ENCODE measurements at regions of chr19 and their contacts with region 1.

Region 1: GRCh38 chr19:1189419-1189818 is 15.4 kb upstream of the SBNO2 start:
- DNase-seq: peak; percentile 56
- H3K4me3 Mint-ChIP-seq: peak overlapping the region; percentile 46
- H3K27ac Mint-ChIP-seq: peak overlapping the region; percentile 83
- H3K4me1 Mint-ChIP-seq: peaks cover 34% of the 10 kb centered on the region
- H3K27me3 Mint-ChIP-seq: no peaks in the 10 kb centered on the region

Region 2: DNA sequence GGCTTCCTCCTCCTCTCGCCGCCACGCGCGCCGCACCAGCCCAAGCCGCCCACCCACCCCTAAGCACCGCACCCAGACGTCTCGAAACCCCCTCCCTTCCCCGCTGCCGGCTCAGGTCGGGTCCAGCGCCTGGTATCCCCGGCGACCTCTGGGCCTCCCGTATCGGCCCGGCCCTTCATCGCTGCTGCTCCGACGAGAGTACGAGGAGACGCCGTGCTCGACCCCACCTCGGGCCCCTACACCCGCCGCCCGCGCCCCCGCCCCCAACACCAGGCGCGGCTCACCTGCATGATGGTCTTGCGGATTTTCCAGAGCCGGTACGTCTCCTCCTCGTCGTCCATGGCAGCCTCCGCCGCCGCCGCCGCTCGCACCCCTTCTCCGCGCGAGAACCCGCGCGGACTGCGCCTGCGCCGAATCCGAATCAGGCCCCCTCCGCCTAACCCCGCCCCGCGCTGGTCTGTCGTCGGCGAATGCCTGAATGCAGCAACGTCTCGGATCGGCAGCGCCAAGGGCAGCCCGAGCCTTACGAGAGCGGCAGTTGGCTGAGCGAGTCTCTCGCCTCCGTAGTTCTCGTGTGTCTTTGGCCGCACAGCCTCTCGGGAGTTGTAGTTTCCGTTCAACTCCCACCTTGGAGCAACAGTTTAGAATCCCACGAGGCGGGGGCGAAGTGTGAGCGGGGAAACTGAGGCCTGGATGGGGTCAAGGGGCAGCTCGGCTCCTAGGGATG is 94.3 kb before region 1 on chr19 and contains the start of gene POLR2E:
- intact Hi-C with region 1: loop called (anchors 1 kb)
- DNase-seq: peak; percentile 98
- H3K4me3 Mint-ChIP-seq: peak within 1 kb of the TSS; percentile 94
- H3K27ac Mint-ChIP-seq: peak within 1 kb of the TSS; percentile 97
- H3K4me1 Mint-ChIP-seq: peaks cover 41% of the 10 kb centered on the region
- H3K27me3 Mint-ChIP-seq: peaks cover 2% of the 10 kb centered on the region
- total RNA-seq, gene POLR2E: 265 and 282 TPM in 2 replicates

Region 3: DNA sequence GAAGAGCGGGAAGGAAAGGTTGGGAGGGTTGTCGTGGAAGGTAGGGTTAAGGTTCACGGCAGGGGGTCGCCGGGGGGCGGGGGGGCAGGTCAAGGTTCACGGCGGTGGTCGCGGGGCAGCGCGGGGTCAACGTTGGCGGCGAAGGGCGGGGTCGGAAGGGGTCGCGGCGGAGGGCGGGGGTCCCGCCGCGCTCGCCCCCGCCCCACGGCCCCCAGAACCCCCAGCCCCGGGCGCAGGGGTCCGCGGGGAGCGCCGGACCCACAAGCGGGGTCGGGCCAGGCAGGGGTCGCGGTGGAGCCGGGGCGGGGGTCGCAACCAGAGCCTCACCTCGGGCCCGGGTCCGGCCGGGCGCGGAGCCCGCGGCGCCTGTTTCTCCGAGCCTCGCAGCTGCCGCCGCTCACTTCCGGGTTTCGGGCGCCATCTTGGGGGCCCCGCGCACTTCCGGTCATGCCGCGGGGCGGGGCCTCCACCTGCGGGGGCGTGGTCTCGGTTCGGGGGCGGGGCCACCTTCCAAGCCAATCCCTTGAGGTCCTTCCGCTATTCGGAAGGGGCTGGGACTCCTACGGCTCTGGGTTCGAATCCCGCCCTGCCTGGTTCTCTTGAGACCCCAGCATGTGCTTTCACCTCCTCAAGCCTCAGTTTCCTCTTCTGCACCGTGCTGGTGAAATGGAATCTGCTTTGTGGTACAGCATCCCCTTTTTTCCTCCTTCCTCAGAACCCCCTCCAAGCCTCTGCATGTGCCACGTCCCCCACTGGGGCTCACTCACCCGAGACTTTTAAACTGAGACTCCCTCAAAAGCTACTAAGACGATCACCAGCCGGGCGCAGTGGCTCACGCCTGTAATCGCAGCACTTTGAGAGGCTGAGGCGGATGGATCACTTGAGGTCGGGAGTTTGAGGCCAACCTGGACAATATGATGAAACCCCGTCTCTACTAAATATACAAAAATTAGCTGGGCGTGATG is 15.3 kb before region 1 on chr19 and contains the start of gene SBNO2:
- intact Hi-C with region 1: loop called (anchors 1 kb)
- DNase-seq: peak; percentile 88
- H3K4me3 Mint-ChIP-seq: peak within 1 kb of the TSS; percentile 89
- H3K27ac Mint-ChIP-seq: peak within 1 kb of the TSS; percentile 88
- H3K4me1 Mint-ChIP-seq: peaks cover 25% of the 10 kb centered on the region
- H3K27me3 Mint-ChIP-seq: no peaks in the 10 kb centered on the region
- total RNA-seq, gene SBNO2: 95.5 and 96.9 TPM in 2 replicates

Region 4: GRCh38 chr19:1241417-1242095 is 52.1 kb after region 1 on chr19 and contains the start of gene ATP5F1D:
- intact Hi-C with region 1: loop called (anchors 5 kb)
- DNase-seq: peak; percentile 91
- H3K4me3 Mint-ChIP-seq: peak within 1 kb of the TSS; percentile 91
- H3K27ac Mint-ChIP-seq: peak within 1 kb of the TSS; percentile 84
- H3K4me1 Mint-ChIP-seq: peaks cover 27% of the 10 kb centered on the region
- H3K27me3 Mint-ChIP-seq: peaks cover 16% of the 10 kb centered on the region
- total RNA-seq, gene ATP5F1D: 234 and 239 TPM in 2 replicates

Measured in activated T-helper 1 cell treated with anti-CD3 and anti-CD28 coated beads, Interleukin-12 subunit alpha, Interleukin-12 subunit beta, Interleukin-2, Interleukin-4 antibody, amounts not matched to agents 30 ng/mL and 10 ng/mL and 1 ng/mL, durations not matched to agents 14 hours and 24 hours and 36 hours (primary cell).